ENCODE measurements at regions of chr17 and their contacts with region 1.

Region 1: DNA sequence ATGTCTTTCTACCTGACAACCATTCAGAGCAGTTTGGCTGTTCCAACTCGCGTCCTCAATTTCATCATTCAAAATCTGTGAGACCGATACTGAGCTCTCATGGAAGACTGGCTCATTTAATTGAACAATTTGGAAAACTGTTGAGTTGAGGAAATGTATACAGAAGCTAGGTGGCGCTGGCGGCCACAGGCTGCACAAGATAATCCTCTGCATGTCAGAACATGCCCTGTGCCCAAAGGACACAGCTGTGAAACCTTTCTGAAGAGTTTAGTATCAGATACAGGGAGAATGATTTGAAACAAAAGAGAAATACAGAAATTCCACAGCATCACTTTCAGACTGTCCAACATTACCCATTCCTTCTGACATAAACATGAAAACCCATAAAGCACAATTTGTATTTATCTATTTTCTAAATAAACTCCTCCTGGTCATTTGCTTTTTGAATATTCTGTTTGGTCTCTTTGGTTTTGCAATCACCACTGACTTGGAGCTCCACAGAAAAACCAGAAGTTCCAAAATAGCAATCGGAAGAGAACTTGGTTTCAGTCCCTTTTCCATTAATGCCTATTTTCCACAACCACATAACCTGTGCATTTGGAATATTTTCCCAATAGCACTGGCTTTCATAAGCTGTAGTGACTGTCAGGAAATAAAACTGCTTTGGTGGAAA is 192.8 kb downstream of the MAP2K6 start:
- DNase-seq: peak; percentile 86
- ATAC-seq: peak; percentile 42
- H3K4me3 ChIP-seq: no peak overlapping the region
- H3K27ac ChIP-seq: no peak overlapping the region
- H3K4me1 ChIP-seq: peaks cover 30% of the 10 kb centered on the region
- H3K27me3 ChIP-seq: no peaks in the 10 kb centered on the region
- CTCF ChIP-seq: peak; percentile 99

Region 2: DNA sequence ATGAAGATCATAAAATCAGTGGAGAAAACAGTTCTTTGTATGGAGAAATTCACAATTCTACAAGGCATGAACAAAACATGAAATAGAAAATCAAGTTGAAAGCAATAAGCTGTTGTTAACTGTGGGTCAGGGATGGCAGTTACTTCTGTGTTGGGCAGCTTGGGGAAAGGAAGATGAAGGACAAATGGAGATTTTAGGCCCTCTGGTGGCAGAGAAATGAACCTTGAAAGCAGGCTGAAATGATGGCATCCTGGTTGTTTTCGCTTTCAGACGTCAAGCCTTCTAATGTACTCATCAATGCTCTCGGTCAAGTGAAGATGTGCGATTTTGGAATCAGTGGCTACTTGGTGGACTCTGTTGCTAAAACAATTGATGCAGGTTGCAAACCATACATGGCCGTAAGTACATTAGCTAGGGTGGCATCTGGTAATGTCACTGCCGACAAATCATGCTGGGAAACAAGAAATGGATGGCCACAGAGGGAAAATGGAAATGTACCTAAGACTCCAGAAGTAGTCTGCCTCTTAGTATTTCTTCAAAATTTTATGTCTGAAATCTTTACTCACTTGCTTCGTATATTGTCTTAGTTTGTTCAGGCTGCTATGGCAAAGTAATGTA is 83.9 kb before region 1 on chr17:
- CTCF ChIA-PET with region 1: interaction called, 5 read pairs
- POLR2A ChIA-PET with region 1: no interaction called
- intact Hi-C with region 1: loop called (anchors 2 kb)
- DNase-seq: peak; percentile 76
- ATAC-seq: peak; percentile 90
- H3K4me3 ChIP-seq: peak overlapping the region; percentile 53
- H3K27ac ChIP-seq: no peak overlapping the region
- H3K4me1 ChIP-seq: 0 out of 2 replicates have a peak, but pooled peaks cover 3% of the 10 kb centered on the region
- H3K27me3 ChIP-seq: no peaks in the 10 kb centered on the region
- CTCF ChIP-seq: peak; percentile 95

Region 3: DNA sequence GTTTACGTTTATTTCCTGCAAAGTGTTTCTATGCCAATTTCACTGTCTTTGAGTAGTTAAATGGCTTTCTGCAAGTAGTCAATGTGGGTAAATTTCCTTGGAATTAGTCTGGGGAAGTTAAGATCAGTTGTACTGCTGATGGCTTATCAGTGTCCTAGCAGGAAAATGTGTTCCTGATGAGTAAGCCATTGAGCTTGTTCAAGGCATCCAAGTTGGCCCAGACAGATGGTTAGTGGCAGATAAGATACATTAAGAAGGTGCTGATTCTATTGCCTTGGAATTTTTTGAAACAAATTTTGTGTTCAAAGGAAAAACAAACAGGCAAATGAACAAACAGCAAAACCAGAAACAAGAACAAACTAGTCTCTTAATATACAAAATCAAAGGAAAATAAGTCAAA is 65.6 kb after region 1 on chr17:
- CTCF ChIA-PET with region 1: no interaction called
- POLR2A ChIA-PET with region 1: no interaction called
- intact Hi-C with region 1: loop called (anchors 1 kb)
- DNase-seq: peak; percentile 46
- ATAC-seq: peak; percentile 31
- H3K4me3 ChIP-seq: no peak overlapping the region
- H3K27ac ChIP-seq: no peak overlapping the region
- H3K4me1 ChIP-seq: peaks cover 7% of the 10 kb centered on the region
- H3K27me3 ChIP-seq: no peaks in the 10 kb centered on the region
- CTCF ChIP-seq: no peak

Region 4: DNA sequence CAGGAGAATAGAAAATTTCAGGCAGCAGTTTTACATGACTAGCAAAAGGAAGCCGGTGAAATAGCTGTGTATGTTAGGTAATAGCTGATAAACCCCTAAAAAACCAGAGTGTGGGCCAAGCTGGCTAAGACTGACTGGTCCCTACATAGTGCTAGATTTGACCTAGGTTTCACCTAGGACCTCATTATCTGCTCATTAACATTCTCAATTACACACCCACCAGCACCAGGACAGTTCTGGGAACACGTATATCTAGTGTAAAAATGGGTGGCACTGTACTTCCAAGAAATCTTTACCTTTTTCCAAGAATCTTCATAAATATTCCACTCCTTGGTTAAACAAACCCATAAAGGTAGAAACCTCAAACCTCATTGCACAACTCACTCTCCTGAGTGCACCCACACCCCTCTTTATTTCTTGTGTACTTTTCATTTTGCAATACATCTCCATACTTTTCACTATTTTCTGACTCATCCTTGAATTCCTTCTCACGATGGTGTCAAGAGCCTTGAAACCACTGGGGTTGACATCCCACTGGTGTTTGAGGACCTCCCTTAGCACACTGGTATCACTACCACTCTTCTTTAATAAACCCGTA is 205.0 kb after region 1 on chr17:
- CTCF ChIA-PET with region 1: interaction called, 5 read pairs
- POLR2A ChIA-PET with region 1: no interaction called
- intact Hi-C with region 1: loop called (anchors 1 kb)
- DNase-seq: peak; percentile 92
- ATAC-seq: peak; percentile 86
- H3K4me3 ChIP-seq: no peak overlapping the region
- H3K27ac ChIP-seq: peak overlapping the region; percentile 45
- H3K4me1 ChIP-seq: peaks cover 36% of the 10 kb centered on the region
- H3K27me3 ChIP-seq: no peaks in the 10 kb centered on the region
- CTCF ChIP-seq: no peak

Region 5: DNA sequence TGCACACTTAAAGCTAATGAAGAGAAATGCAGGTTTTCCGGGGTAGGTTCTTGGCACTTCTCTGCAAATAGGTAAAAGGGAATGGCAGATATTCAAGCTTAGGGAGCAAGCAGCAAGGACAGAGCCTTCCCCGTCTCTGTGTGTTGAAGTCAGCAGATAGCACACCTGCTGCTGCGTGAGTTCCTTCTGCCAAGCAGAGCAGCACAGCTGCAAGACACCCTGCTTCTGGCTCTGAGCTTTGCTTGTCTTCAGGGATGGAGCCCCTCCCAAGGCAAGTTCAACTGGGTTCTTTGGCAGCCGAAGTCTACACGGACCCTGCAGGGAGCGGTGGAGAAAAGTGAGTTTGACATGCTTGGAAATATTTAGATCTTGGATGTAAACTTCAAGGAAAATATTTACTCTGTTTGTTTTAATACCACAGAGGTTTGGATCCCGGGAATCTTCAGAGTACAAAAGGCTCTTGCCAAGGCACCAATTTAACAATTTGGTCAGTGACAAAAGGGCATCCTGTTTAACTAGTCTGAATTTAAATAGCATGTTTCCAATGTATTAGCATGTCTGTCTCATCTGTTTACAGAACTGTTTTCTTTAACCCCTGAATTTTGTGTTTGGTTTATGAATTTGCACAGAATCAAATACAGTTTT is 354.3 kb after region 1 on chr17:
- CTCF ChIA-PET with region 1: interaction called, 5 read pairs
- POLR2A ChIA-PET with region 1: no interaction called
- intact Hi-C with region 1: loop called (anchors 10 kb)
- DNase-seq: peak; percentile 34
- ATAC-seq: peak; percentile 92
- H3K4me3 ChIP-seq: peak overlapping the region; percentile 7; the same call in 1 of the 2 replicates
- H3K27ac ChIP-seq: no peak overlapping the region
- H3K4me1 ChIP-seq: peaks cover 10% of the 10 kb centered on the region
- H3K27me3 ChIP-seq: no peaks in the 10 kb centered on the region
- CTCF ChIP-seq: no peak

Region 6: GRCh38 chr17:70168977-70169708 is 561.8 kb after region 1 on chr17 and contains the start of gene KCNJ2:
- CTCF ChIA-PET with region 1: interaction called, 7 read pairs
- POLR2A ChIA-PET with region 1: no interaction called
- intact Hi-C with region 1: loop called (anchors 1 kb)
- DNase-seq: peak; percentile 94
- ATAC-seq: peak; percentile 91
- H3K4me3 ChIP-seq: peak within 1 kb of the TSS; percentile 72
- H3K27ac ChIP-seq: no peak within 1 kb of the TSS
- H3K4me1 ChIP-seq: peaks cover 11% of the 10 kb centered on the region
- H3K27me3 ChIP-seq: peaks cover 34% of the 10 kb centered on the region
- CTCF ChIP-seq: no peak
- total RNA-seq, gene KCNJ2: 0.36 TPM in 1 of 2 replicates, not detected in the other